GM12878 (cell line): ENCODE measurements at regions of chr2 and their contacts with region 1.

Region 1: DNA sequence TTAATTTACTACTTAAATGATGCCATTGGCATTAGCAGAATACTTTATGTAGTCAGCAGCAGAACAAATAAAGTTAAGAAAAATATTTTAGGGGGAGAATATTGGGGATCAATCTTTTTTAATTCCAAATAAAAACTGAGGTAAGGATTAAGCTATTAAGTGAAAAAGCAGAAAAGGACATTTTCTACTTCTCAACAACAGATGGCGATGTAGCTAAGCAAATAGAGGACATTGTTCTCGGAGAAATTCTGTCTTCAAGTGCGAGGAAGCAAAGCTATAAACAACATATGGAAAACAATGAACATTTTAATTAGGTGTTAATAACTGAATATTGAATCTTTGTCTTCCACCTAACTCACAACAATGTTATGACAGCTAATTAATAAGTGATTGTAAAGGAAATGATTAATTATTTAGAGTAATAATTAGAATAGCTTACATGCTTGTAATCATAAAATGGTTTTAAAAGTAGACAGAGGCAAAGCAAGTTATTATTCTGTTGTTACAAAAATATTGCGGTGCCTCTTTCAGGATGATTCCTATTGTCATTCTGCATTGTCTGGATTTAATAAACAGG is 32.9 kb upstream of the CCDC93 start:
- DNase-seq: no peak
- ATAC-seq: peak; percentile 44; the same call in 2 of the 3 replicates
- H3K4me3 ChIP-seq: no peak overlapping the region
- H3K27ac ChIP-seq: no peak overlapping the region
- H3K4me1 ChIP-seq: peaks cover 7% of the 10 kb centered on the region; the same call in 1 of the 2 replicates
- H3K27me3 ChIP-seq: peaks cover 0 to 5% of the 10 kb centered on the region in 2 experiments; a peak in 2 of 4 replicates
- CTCF ChIP-seq: peak; percentile 50 to 73 (median 59)
- EP300 ChIP-seq: no peak
- POLR2A ChIP-seq: no peak
- RAD21 ChIP-seq: peak; percentile 94

Region 2: DNA sequence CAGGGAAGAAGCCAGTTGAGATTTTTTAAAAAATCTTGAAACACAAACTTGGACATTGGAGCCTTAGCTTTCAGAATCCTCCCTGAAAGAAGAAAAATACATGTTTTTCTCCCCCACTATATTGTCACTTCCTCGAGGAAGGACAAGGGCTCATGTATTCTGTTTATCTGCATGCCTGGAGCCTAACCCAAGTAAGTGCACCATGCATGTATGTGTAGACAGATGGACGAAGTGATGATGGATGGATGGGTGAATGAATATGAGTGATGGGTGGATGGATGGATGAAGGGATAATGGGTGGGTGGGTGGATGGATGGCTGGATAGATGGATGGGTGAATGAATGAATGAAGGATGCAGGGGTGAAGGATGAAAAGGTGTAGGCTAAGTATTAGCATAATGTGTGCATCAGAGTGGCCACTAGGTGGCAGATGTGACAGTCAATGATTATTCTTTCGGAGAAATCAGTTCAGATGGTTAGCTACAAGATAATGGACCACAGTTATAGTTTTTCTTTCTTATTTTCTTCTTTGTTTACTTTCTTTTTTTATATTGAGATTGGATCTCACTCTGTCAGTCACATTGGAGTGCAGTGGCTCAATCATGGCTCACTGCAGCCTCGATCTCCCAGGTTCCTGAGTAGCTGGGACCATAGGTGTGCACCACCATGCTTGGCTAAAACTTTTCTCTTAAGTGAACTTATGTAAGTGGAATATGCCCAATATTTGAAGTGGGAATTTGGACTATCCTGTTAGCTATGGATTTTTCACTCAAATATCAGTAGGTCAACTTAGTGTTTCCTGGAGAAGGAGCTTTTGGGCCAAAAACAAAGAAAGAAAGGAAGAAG is 14.3 kb before region 1 on chr2:
- CTCF ChIA-PET with region 1: interaction called, 88 read pairs
- POLR2A ChIA-PET with region 1: no interaction called
- RAD21 ChIA-PET with region 1: interaction called, 31 read pairs
- SMC1A ChIA-PET with region 1: interaction called, 39 read pairs
- in situ Hi-C with region 1: no loop called
- intact Hi-C with region 1: no loop called
- DNase-seq: no peak
- ATAC-seq: peak; percentile 95
- H3K4me3 ChIP-seq: no peak overlapping the region
- H3K27ac ChIP-seq: no peak overlapping the region
- H3K4me1 ChIP-seq: no peaks in the 10 kb centered on the region
- H3K27me3 ChIP-seq: no peaks in the 10 kb centered on the region; a peak in 1 of 4 replicates
- CTCF ChIP-seq: peak; percentile 73 to 90 (median 74)
- EP300 ChIP-seq: no peak
- POLR2A ChIP-seq: no peak
- RAD21 ChIP-seq: peak; percentile 38

Region 3: GRCh38 chr2:118088051-118089024 is 41.6 kb after region 1 on chr2 and contains the start of gene INSIG2:
- CTCF ChIA-PET with region 1: interaction called, 17 read pairs
- POLR2A ChIA-PET with region 1: interaction called, 5 read pairs
- RAD21 ChIA-PET with region 1: interaction called, 16 read pairs
- SMC1A ChIA-PET with region 1: interaction called, 29 read pairs
- in situ Hi-C with region 1: no loop called
- intact Hi-C with region 1: no loop called
- DNase-seq: peak; percentile 98
- ATAC-seq: peak; percentile 95
- H3K4me3 ChIP-seq: peak within 1 kb of the TSS; percentile 70
- H3K27ac ChIP-seq: peak within 1 kb of the TSS; percentile 69
- H3K4me1 ChIP-seq: no peaks in the 10 kb centered on the region
- H3K27me3 ChIP-seq: 0 out of 4 replicates have a peak, but pooled peaks cover 0 to 3% of the 10 kb centered on the region in 2 experiments
- CTCF ChIP-seq: peak in 1 of 3 experiments; percentile 21; a peak in 1 of 6 replicates
- EP300 ChIP-seq: 0 out of 4 replicates have a peak, but pooled peaks of 1 of the 2 experiments have one; percentile 17
- POLR2A ChIP-seq: peak; percentile 74
- RAD21 ChIP-seq: no peak
- polyA plus RNA-seq, gene INSIG2: 14.2 to 15.6 TPM

Region 4: GRCh38 chr2:118154176-118154575 is 107.5 kb after region 1 on chr2:
- CTCF ChIA-PET with region 1: interaction called, 36 read pairs
- POLR2A ChIA-PET with region 1: no interaction called
- RAD21 ChIA-PET with region 1: interaction called, 4 read pairs
- SMC1A ChIA-PET with region 1: interaction called, 29 read pairs
- in situ Hi-C with region 1: no loop called
- intact Hi-C with region 1: loop called (anchors 5 kb)
- DNase-seq: no peak
- ATAC-seq: no peak
- H3K4me3 ChIP-seq: no peak overlapping the region
- H3K27ac ChIP-seq: no peak overlapping the region
- H3K4me1 ChIP-seq: no peaks in the 10 kb centered on the region
- H3K27me3 ChIP-seq: no peaks in the 10 kb centered on the region
- CTCF ChIP-seq: no peak
- EP300 ChIP-seq: no peak
- POLR2A ChIP-seq: no peak
- RAD21 ChIP-seq: no peak

Region 5: DNA sequence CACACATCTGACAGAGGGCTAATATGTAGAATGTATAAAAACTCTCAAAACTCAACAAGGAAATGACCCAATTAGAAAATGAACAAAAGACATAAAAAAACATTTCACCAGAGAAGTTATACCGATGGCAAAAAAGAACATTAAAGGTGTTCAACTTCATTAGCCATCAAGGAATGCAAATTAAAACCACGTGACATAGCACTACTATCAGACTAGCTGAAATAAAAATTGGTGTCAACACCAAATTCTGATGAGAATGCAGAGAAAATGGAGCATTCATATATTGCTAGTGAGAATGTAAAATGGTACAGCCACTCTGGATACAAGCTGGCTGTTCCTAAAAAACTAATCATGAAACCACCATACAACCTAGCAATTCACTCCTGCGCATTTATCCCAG is 169.5 kb after region 1 on chr2:
- CTCF ChIA-PET with region 1: interaction called, 17 read pairs
- POLR2A ChIA-PET with region 1: no interaction called
- RAD21 ChIA-PET with region 1: no interaction called
- SMC1A ChIA-PET with region 1: interaction called, 20 read pairs
- in situ Hi-C with region 1: no loop called
- intact Hi-C with region 1: loop called (anchors 5 kb)
- DNase-seq: no peak
- ATAC-seq: no peak
- H3K4me3 ChIP-seq: no peak overlapping the region
- H3K27ac ChIP-seq: no peak overlapping the region
- H3K4me1 ChIP-seq: no peaks in the 10 kb centered on the region
- H3K27me3 ChIP-seq: no peaks in the 10 kb centered on the region; a peak in 1 of 4 replicates
- CTCF ChIP-seq: no peak
- EP300 ChIP-seq: no peak
- POLR2A ChIP-seq: no peak
- RAD21 ChIP-seq: no peak